ENCODE measurements at regions of chr12 and their contacts with region 1.

Region 1: GRCh38 chr12:56127888-56128669 is at the start of gene ESYT1:
- DNase-seq: peak; percentile 97 to 100
- H3K4me3 ChIP-seq: peak within 1 kb of the TSS; percentile 79 to 95 (median 90)
- H3K27ac ChIP-seq: peak within 1 kb of the TSS; percentile 88
- H3K4me1 ChIP-seq: peaks cover 0 to 13% (median 5%) of the 10 kb centered on the region in 4 experiments; a peak in 5 of 7 replicates
- H3K27me3 ChIP-seq: no peaks in the 10 kb centered on the region
- CTCF ChIP-seq: no peak
- EP300 ChIP-seq: peak in 1 of 2 experiments; percentile 57; a peak in 1 of 3 replicates
- POLR2A ChIP-seq: peak; percentile 93 to 96
- RAD21 ChIP-seq: no peak; a peak in 1 of 4 replicates
- total RNA-seq, gene ESYT1: 85.1 and 86.9 TPM in 2 replicates

Region 2: DNA sequence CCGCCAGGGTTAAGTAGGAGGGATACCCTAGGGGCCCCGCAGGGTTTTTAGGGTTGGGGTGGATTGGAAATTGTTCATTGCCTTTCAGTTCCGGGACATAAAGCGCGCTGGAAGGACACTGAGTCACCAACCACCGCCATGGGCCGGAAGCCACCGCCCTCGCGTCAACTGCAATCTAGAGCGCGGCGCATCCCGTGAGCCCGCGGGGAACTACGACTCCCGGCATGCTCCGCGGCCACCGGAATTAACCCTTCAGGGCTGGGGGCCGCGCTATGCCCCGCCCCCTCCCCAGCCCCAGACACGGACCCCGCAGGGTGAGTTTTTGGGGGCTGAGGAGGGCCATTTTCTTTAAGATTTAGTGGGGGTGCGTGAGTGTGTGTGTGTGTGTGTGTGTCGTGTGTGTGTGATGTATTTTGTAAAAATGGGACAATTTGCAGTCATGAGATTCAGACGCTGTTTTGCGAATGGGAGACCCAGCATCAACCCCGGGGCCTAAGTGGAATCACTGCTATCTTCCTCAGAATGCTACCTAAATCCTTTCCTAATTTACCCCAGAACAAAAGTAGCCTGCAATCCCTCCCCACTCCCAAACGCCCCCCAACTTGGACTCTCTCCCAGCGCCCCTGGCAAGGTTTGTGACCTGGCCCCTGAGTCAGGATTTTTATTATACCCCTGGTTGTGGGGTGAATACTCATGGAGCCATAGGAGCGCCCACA is 24.4 kb after region 1 on chr12 and contains the start of gene MYL6B:
- CTCF ChIA-PET with region 1: interaction called, 8 read pairs
- POLR2A ChIA-PET with region 1: interaction called, 26 read pairs
- DNase-seq: peak; percentile 66 to 91
- H3K4me3 ChIP-seq: peak within 1 kb of the TSS; percentile 66 to 84 (median 82)
- H3K27ac ChIP-seq: no peak within 1 kb of the TSS
- H3K4me1 ChIP-seq: peaks cover 5 to 13% (median 9%) of the 10 kb centered on the region in 4 experiments; a peak in 6 of 7 replicates
- H3K27me3 ChIP-seq: no peaks in the 10 kb centered on the region; a peak in 1 of 7 replicates
- CTCF ChIP-seq: no peak
- EP300 ChIP-seq: no peak
- POLR2A ChIP-seq: peak; percentile 46 to 59; a peak in 1 of 3 replicates
- RAD21 ChIP-seq: no peak
- total RNA-seq, gene MYL6B: 162 and 163 TPM in 2 replicates

Region 3: GRCh38 chr12:56315622-56316473 is 187.8 kb after region 1 on chr12 and contains the start of gene CNPY2:
- CTCF ChIA-PET with region 1: no interaction called
- POLR2A ChIA-PET with region 1: no interaction called
- DNase-seq: peak; percentile 94 to 98
- H3K4me3 ChIP-seq: peak within 1 kb of the TSS; percentile 70 to 98 (median 96)
- H3K27ac ChIP-seq: peak within 1 kb of the TSS; percentile 86
- H3K4me1 ChIP-seq: peaks cover 0 to 6% (median 3%) of the 10 kb centered on the region in 4 experiments; a peak in 5 of 7 replicates
- H3K27me3 ChIP-seq: no peaks in the 10 kb centered on the region
- CTCF ChIP-seq: peak; percentile 20 to 44 (median 28)
- EP300 ChIP-seq: no peak
- POLR2A ChIP-seq: peak; percentile 84 to 97
- RAD21 ChIP-seq: peak; percentile 37 to 44; a peak in 3 of 4 replicates
- total RNA-seq, gene CNPY2: 195 and 203 TPM in 2 replicates

Measured in H1 (cell line).